ENCODE measurements at regions of chr12 and their contacts with region 1.

Region 1: DNA sequence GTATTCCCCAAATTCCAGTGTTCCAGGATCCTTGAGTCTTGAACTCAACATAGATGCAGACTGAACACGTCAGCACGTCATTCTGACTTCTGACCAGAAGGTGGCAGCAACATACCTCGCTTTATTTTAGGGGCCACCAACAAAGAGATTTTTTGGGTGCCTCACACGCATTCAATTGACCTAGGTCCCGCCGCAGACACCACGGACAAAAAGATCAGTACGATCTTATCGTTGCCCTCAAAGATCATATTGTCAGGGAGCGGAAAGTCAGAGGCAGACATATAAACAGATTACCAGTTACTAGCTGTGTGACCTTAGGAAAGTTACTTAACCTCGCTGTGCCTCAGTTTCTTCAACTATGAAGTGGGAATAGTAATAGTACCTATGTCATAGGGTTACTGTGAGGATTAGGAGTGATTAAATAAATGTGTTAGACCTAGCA is 6.5 kb upstream of the PRPH start:
- DNase-seq: peak; percentile 62 to 78 (median 72)
- H3K4me3 ChIP-seq: no peak overlapping the region
- H3K27ac ChIP-seq: no peak overlapping the region
- H3K4me1 ChIP-seq: no peaks in the 10 kb centered on the region
- H3K27me3 ChIP-seq: peaks cover 5 to 35% (median 14%) of the 10 kb centered on the region in 5 experiments

Region 2: DNA sequence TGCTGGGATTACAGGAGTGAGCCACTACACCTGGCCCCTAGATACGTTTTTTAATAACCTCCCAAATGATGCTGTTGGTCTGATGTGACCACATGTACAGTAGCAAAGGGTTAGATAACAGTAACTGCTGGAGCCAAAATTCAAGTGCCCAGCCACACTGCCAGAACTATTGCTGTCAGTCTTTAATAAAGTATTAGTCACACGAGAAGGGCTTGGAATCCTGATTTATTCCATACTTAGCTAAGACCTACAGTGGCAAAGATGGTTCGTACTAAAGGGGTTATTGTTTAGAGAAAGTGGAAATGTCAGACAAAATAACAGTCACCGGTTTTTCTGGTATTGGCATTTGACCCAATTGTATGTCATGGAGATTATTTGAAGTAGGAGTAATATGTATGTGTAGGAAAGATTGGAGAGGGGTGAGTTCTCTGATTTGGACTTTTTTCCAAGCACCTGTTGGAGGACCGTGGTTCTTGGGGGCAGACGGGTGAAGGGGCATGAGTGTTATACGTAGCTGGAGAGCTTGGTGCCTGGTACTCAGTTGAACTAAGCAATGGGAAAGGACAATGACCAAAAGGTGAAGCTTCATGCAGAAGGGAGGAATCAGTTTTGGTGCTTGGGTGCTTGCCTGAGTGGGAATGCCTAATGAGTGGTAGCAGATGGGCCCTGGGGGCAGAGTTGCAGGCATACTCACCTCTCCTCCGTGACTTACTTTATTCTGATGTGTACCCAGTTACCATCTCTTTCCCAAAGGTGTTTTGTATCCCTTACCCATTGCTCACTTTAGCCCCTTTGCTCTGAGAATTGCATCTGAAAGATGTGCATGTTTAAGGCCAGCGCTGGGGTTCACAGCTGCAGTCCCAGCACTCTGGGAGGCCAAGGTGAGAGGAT is 13.8 kb before region 1 on chr12:
- CTCF ChIA-PET with region 1: interaction called, 27 read pairs
- POLR2A ChIA-PET with region 1: no interaction called
- DNase-seq: no peak
- H3K4me3 ChIP-seq: no peak overlapping the region
- H3K27ac ChIP-seq: no peak overlapping the region
- H3K4me1 ChIP-seq: no peaks in the 10 kb centered on the region
- H3K27me3 ChIP-seq: no peaks in the 10 kb centered on the region

Region 3: GRCh38 chr12:49304161-49304560 is 15.7 kb after region 1 on chr12:
- CTCF ChIA-PET with region 1: interaction called, 21 read pairs
- POLR2A ChIA-PET with region 1: no interaction called
- DNase-seq: no peak
- H3K4me3 ChIP-seq: no peak overlapping the region
- H3K27ac ChIP-seq: no peak overlapping the region
- H3K4me1 ChIP-seq: no peaks in the 10 kb centered on the region
- H3K27me3 ChIP-seq: peaks cover 1 to 7% (median 5%) of the 10 kb centered on the region in 5 experiments

Region 4: GRCh38 chr12:49336645-49337584 is 48.5 kb after region 1 on chr12 and contains the start of gene C1QL4:
- CTCF ChIA-PET with region 1: interaction called, 172 read pairs
- POLR2A ChIA-PET with region 1: no interaction called
- DNase-seq: peak; percentile 78 to 84 (median 84)
- H3K4me3 ChIP-seq: peak within 1 kb of the TSS in 6 of 7 experiments; percentile 23 to 55 (median 41)
- H3K27ac ChIP-seq: no peak within 1 kb of the TSS
- H3K4me1 ChIP-seq: peaks cover 0 to 20% (median 10%) of the 10 kb centered on the region in 4 experiments
- H3K27me3 ChIP-seq: peaks cover 7 to 100% (median 46%) of the 10 kb centered on the region in 5 experiments

Region 5: DNA sequence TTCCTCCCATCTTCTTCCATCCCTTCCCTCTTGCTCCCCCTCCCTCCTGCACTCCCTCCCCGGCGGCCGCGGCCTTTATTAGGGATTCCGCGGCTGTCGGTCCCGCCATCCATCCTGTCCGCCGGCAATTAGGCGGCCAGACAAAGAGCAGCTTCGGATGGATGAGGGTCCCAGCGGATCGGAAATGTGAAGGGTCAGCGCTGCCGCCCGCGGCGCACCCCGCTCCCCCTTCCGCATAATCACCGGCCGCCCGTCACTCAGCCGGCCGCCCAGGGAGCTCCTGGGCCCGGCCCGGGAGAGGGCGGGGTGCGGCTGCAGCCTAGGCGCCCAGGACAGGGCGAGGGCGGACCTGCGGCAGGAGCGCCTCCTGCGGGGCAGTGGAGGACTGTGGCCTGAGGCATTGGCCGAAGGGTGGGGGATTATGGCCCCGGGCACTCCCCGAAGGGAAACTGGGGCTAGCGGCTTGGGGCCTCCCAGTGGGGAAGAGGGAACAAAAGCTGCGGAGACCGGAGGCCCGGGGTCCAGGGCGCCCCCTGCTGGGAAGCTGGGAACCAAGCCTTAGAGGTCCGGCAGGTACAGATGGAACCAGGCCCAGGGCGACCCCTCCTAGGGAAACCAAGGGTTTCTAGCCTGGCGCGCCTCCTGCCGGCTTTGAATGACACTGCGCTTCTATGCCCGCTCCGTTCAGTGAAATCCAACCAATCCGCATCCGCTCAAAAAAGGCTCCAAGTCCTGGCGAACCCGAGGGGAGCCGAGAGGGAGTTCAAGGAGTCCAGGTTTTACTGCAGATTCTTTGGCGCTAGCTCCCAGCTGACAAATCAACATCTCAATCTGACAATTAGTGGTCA is 53.9 kb after region 1 on chr12:
- CTCF ChIA-PET with region 1: interaction called, 172 read pairs
- POLR2A ChIA-PET with region 1: no interaction called
- DNase-seq: peak; percentile 84 to 90 (median 88)
- H3K4me3 ChIP-seq: peak overlapping the region; percentile 8 to 73 (median 26)
- H3K27ac ChIP-seq: no peak overlapping the region
- H3K4me1 ChIP-seq: peaks cover 0 to 55% (median 40%) of the 10 kb centered on the region in 4 experiments
- H3K27me3 ChIP-seq: peaks cover 11 to 100% (median 49%) of the 10 kb centered on the region in 5 experiments

Region 6: DNA sequence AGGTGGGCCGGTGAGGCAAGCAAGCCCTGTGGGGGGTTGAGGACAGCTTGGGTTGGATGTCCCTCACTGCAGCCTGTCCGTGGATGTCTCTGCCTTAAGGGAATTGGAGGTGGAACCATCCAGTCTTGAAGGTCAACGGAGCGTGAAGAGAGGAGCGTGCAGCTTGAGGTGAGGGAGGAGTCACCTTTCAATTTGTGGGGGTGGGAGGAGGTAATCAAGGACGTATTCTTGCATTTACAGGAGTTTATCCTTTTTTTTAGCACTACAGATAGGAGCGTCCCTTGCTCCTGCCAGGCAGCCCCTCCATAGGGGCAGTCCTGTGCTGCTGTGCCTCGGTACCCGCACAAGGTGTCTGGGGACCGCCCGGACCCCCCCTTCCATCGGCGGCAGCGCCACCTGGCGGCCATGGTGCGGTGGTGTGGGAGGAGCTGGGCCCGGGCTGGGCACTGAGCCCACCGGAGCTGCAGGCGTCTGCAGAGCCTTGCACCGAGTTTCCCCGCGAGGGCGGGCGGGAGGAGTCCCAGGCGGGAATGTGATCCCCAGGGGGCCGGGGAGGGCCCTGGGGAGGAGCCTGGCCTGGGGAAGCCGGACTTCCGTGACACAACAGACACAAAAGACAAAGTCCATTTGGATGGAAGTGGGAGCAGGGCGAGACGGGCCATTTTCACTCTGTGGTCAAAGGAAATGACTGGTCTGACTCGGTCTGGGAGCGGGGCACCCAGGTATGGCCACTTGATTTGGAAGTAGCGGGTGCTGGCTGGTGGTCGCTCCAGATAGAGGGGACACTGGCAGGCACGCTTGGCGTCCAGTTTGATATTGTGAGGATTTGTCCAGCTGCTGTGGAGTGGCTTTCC is 59.2 kb after region 1 on chr12:
- CTCF ChIA-PET with region 1: interaction called, 124 read pairs
- POLR2A ChIA-PET with region 1: no interaction called
- DNase-seq: peak; percentile 54 to 69 (median 69)
- H3K4me3 ChIP-seq: peak overlapping the region in 5 of 7 experiments; percentile 22 to 66 (median 34)
- H3K27ac ChIP-seq: no peak overlapping the region
- H3K4me1 ChIP-seq: peaks cover 0 to 49% (median 38%) of the 10 kb centered on the region in 4 experiments
- H3K27me3 ChIP-seq: peaks cover 4 to 81% (median 48%) of the 10 kb centered on the region in 5 experiments

Region 7: GRCh38 chr12:49515266-49515665 is 226.8 kb after region 1 on chr12:
- CTCF ChIA-PET with region 1: interaction called, 16 read pairs
- POLR2A ChIA-PET with region 1: interaction called, 5 read pairs
- DNase-seq: peak in 1 of 3 donors; percentile 10
- H3K4me3 ChIP-seq: no peak overlapping the region
- H3K27ac ChIP-seq: no peak overlapping the region
- H3K4me1 ChIP-seq: no peaks in the 10 kb centered on the region
- H3K27me3 ChIP-seq: no peaks in the 10 kb centered on the region

Region 8: GRCh38 chr12:50149311-50149710 is 860.9 kb after region 1 on chr12:
- CTCF ChIA-PET with region 1: no interaction called
- POLR2A ChIA-PET with region 1: no interaction called
- DNase-seq: no peak
- H3K4me3 ChIP-seq: no peak overlapping the region
- H3K27ac ChIP-seq: no peak overlapping the region
- H3K4me1 ChIP-seq: no peaks in the 10 kb centered on the region
- H3K27me3 ChIP-seq: no peaks in the 10 kb centered on the region

Measured in common myeloid progenitor, CD34-positive (primary cell).